Panc1 (cell line): ENCODE measurements at regions of chr1 and their contacts with region 1.

Region 1: GRCh38 chr1:17966341-17966740 is 141.3 kb upstream of the IGSF21 start:
- DNase-seq: no peak
- ATAC-seq: no peak
- H3K4me3 ChIP-seq: no peak overlapping the region
- H3K27ac ChIP-seq: no peak overlapping the region
- H3K4me1 ChIP-seq: no peaks in the 10 kb centered on the region
- H3K27me3 ChIP-seq: peaks cover 11% of the 10 kb centered on the region
- CTCF ChIP-seq: no peak

Region 2: DNA sequence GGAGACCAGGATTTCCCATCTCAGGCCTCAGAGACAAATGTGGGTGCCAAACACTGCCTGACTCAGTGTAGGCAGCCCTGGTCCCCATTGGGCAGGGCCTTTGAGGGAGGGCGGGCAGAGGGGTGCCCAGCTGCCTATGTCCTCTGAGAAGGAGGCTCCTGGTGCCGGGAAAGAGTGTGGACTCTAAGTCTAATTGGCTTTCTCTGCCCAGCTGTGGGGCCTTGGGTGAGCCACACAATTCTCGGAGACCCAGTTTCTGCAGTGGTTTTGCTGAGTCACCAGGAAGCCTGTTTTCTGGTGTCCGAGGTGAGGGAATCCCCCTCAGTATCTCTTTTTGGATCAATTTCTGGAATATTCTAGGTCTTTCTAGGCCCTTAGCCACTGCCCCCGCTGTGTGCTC is 246.5 kb before region 1 on chr1:
- CTCF ChIA-PET with region 1: interaction called, 12 read pairs
- POLR2A ChIA-PET with region 1: no interaction called
- in situ Hi-C with region 1: no loop called
- intact Hi-C with region 1: no loop called
- DNase-seq: no peak
- ATAC-seq: no peak
- H3K4me3 ChIP-seq: no peak overlapping the region
- H3K27ac ChIP-seq: no peak overlapping the region
- H3K4me1 ChIP-seq: no peaks in the 10 kb centered on the region
- H3K27me3 ChIP-seq: no peaks in the 10 kb centered on the region
- CTCF ChIP-seq: no peak

Region 3: GRCh38 chr1:17933971-17934370 is 32.4 kb before region 1 on chr1:
- CTCF ChIA-PET with region 1: no interaction called
- POLR2A ChIA-PET with region 1: no interaction called
- in situ Hi-C with region 1: no loop called
- intact Hi-C with region 1: no loop called
- DNase-seq: no peak
- ATAC-seq: no peak
- H3K4me3 ChIP-seq: no peak overlapping the region
- H3K27ac ChIP-seq: no peak overlapping the region
- H3K4me1 ChIP-seq: no peaks in the 10 kb centered on the region
- H3K27me3 ChIP-seq: peaks cover 10% of the 10 kb centered on the region
- CTCF ChIP-seq: no peak

Region 4: DNA sequence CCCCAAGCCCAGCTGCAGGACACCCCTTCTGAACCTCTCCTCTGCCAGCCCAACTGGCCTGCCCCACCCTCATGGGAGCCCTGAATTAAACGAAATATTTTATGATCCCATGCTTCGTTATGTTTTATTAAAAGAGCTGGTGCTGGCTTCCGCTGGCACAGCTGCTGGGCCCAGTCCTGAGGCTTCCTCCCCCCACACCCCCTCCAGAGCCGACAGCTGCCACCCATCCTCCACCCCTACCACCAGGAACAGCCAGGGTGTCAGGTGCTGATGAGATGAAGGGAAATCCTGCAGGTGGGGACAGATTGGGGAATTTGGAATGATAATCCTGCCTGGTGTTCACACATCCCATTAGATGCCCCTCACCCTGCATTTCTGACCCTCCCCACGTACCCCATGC is 160.3 kb after region 1 on chr1:
- CTCF ChIA-PET with region 1: no interaction called
- POLR2A ChIA-PET with region 1: no interaction called
- in situ Hi-C with region 1: no loop called
- intact Hi-C with region 1: no loop called
- DNase-seq: no peak
- ATAC-seq: no peak
- H3K4me3 ChIP-seq: no peak overlapping the region
- H3K27ac ChIP-seq: no peak overlapping the region
- H3K4me1 ChIP-seq: no peaks in the 10 kb centered on the region
- H3K27me3 ChIP-seq: peaks cover 3% of the 10 kb centered on the region; the same call in 1 of the 2 replicates
- CTCF ChIP-seq: no peak